IMR-90 (cell line): ENCODE measurements at regions of chr1 and their contacts with region 1.

Region 1: GRCh38 chr1:22105611-22106207 is 37.2 kb downstream of the WNT4 start:
- DNase-seq: peak; percentile 69
- ATAC-seq: peak; percentile 77
- H3K4me3 ChIP-seq: no peak overlapping the region
- H3K27ac ChIP-seq: no peak overlapping the region
- H3K4me1 ChIP-seq: peaks cover 9% of the 10 kb centered on the region
- H3K27me3 ChIP-seq: no peaks in the 10 kb centered on the region
- CTCF ChIP-seq: peak; percentile 76
- POLR2A ChIP-seq: no peak
- RAD21 ChIP-seq: peak; percentile 74

Region 2: GRCh38 chr1:22641906-22642636 is 536.4 kb after region 1 on chr1:
- CTCF ChIA-PET with region 1: no interaction called
- POLR2A ChIA-PET with region 1: no interaction called
- dilution Hi-C with region 1: no loop called
- in situ Hi-C with region 1: no loop called
- intact Hi-C with region 1: loop called (anchors 10 kb)
- DNase-seq: peak; percentile 27
- ATAC-seq: peak; percentile 88
- H3K4me3 ChIP-seq: no peak overlapping the region
- H3K27ac ChIP-seq: no peak overlapping the region
- H3K4me1 ChIP-seq: peaks cover 2% of the 10 kb centered on the region; the same call in 1 of the 2 replicates
- H3K27me3 ChIP-seq: peaks cover 42% of the 10 kb centered on the region
- CTCF ChIP-seq: peak; percentile 86
- POLR2A ChIP-seq: no peak
- RAD21 ChIP-seq: peak; percentile 91

Region 3: DNA sequence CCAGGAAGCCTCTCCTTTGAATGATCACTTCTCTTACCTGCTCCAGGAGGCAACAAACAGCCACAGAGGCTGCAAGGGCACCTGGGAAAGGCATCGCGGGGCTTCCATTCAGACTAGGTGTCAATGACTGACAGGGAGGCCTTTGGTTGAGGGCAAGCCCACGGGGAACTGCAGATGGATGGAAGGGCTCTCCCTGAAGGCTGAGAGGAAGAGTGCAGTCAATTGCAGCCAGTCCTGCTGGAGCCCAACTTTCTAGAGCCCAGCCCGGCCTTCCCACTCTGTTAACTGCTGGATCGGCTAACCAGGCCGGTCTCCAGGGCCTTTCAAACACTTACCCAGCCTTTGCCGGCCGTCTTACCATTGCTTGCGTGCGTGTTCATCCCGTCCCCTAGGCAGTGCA is 777.7 kb after region 1 on chr1:
- CTCF ChIA-PET with region 1: no interaction called
- POLR2A ChIA-PET with region 1: interaction called, 13 read pairs
- dilution Hi-C with region 1: no loop called
- in situ Hi-C with region 1: no loop called
- intact Hi-C with region 1: no loop called
- DNase-seq: no peak
- ATAC-seq: no peak
- H3K4me3 ChIP-seq: no peak overlapping the region
- H3K27ac ChIP-seq: no peak overlapping the region
- H3K4me1 ChIP-seq: peaks cover 7% of the 10 kb centered on the region
- H3K27me3 ChIP-seq: no peaks in the 10 kb centered on the region
- CTCF ChIP-seq: no peak
- POLR2A ChIP-seq: no peak
- RAD21 ChIP-seq: no peak